Heart right ventricle (tissue), 16 donors: ENCODE measurements at regions of chr19 and their contacts with region 1.

Region 1: GRCh38 chr19:11339254-11340098 is at the start of gene RAB3D:
- DNase-seq: peak; percentile 95 to 96
- ATAC-seq: peak; percentile 93 to 99 (median 97)
- H3K4me3 ChIP-seq: peak within 1 kb of the TSS; percentile 58 to 84 (median 81)
- H3K27ac ChIP-seq: peak within 1 kb of the TSS; percentile 23 to 91 (median 82)
- H3K4me1 ChIP-seq: peaks cover 3 to 45% (median 19%) of the 10 kb centered on the region in 9 donors
- H3K27me3 ChIP-seq: no peaks in the 10 kb centered on the region
- CTCF ChIP-seq: no peak
- total RNA-seq, gene RAB3D: 4.5 to 11.6 (median 6.3) TPM

Region 2: GRCh38 chr19:11261941-11262839 is 77.3 kb before region 1 on chr19 and contains the start of gene DOCK6:
- intact Hi-C with region 1: no loop called
- DNase-seq: peak in 1 of 2 donors; percentile 56
- ATAC-seq: peak; percentile 24 to 72 (median 42)
- H3K4me3 ChIP-seq: peak within 1 kb of the TSS; percentile 51 to 98 (median 76)
- H3K27ac ChIP-seq: peak within 1 kb of the TSS; percentile 88 to 99 (median 93)
- H3K4me1 ChIP-seq: peaks cover 2 to 54% (median 12%) of the 10 kb centered on the region in 9 donors
- H3K27me3 ChIP-seq: peaks cover 0 to 38% (median 0%) of the 10 kb centered on the region in 7 donors
- CTCF ChIP-seq: peak in 7 of 9 donors; percentile 33 to 64 (median 49)
- total RNA-seq, gene DOCK6: 27.6 to 57.2 (median 40.2) TPM

Region 3: DNA sequence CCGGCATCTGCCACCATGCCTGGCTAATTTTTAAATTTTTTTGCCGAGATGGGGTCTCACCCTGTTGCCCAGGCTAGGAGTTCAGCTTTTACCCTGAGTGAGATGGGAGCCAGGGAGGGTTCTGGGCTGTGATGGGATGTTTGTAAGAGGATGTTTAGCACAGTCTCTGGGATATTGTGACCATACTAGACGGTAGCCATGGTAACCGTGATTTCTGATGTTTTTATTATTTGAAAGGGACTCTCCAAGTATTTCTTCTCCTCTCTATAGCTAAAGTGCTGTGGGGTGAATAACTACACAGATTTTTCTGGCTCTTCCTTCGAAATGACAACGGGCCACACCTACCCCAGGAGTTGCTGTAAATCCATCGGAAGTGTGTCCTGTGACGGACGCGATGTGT is 33.1 kb before region 1 on chr19:
- intact Hi-C with region 1: loop called in 1 of 10 experiments (anchors 2 kb)
- DNase-seq: no peak
- ATAC-seq: no peak
- H3K4me3 ChIP-seq: no peak overlapping the region
- H3K27ac ChIP-seq: no peak overlapping the region
- H3K4me1 ChIP-seq: no peaks in the 10 kb centered on the region
- H3K27me3 ChIP-seq: no peaks in the 10 kb centered on the region
- CTCF ChIP-seq: no peak

Region 4: DNA sequence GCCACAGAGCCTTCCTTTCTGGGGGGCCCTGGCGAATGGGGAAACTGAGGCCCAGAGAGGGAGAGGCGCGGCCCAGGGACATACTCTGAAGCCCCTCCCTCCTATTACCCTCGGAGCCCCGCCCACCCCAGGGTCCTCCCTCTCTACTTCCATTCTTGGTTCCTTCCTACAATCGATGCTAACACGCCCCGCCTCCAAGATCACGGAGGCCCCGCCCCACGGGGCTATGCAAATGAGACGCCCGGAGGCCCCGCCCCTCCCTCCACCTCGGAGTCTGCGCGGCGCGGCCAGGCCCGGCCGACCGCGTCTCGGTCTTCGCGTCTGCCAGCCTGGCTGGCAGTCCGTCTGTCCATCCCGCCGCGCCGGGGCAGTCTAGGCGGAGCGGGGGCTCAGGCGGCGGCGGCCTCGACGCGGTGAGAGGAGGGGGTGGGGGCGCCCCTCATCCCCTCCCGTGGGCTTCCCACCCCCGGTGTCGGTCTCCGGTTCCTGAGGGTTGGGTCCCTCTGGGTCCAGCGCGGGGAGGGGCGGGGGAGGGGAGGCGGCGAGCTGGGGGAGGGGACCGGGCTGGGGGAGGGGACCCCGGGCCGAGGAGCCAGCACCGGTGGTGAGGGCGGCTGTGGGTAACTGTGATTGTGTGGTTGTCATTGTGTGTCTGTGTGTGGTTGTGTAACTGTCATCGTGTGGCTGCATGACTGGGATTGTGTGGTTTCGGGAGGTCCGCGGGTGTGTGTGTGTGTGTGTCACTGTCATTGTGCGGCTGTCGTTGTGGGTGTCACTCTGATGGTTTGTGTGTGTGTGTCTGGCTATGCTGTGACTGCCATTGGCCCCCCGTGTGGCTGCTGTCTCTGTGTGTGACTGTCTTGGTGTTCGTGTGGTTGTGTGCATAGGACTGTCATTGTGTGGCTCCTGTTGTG is 15.9 kb after region 1 on chr19 and contains the start of gene PLPPR2:
- intact Hi-C with region 1: no loop called
- DNase-seq: peak; percentile 93 to 95
- ATAC-seq: peak; percentile 92 to 97 (median 94)
- H3K4me3 ChIP-seq: peak within 1 kb of the TSS; percentile 51 to 71 (median 64)
- H3K27ac ChIP-seq: peak within 1 kb of the TSS in 9 of 10 donors; percentile 30 to 86 (median 63)
- H3K4me1 ChIP-seq: peaks cover 0 to 16% (median 6%) of the 10 kb centered on the region in 9 donors
- H3K27me3 ChIP-seq: no peaks in the 10 kb centered on the region
- CTCF ChIP-seq: no peak
- total RNA-seq, gene PLPPR2: 4.1 to 19.8 (median 10.3) TPM

Region 5: GRCh38 chr19:11410682-11411081 is 71.2 kb after region 1 on chr19:
- intact Hi-C with region 1: no loop called
- DNase-seq: no peak
- ATAC-seq: no peak
- H3K4me3 ChIP-seq: no peak overlapping the region
- H3K27ac ChIP-seq: no peak overlapping the region
- H3K4me1 ChIP-seq: peaks cover 0 to 13% (median 4%) of the 10 kb centered on the region in 9 donors
- H3K27me3 ChIP-seq: peaks cover 0 to 26% (median 17%) of the 10 kb centered on the region in 7 donors
- CTCF ChIP-seq: no peak

Region 6: GRCh38 chr19:11597202-11598102 is 258.0 kb after region 1 on chr19 and contains the start of gene ZNF627:
- intact Hi-C with region 1: no loop called
- DNase-seq: peak; percentile 98 to 100
- ATAC-seq: peak; percentile 99 to 100 (median 100)
- H3K4me3 ChIP-seq: peak within 1 kb of the TSS; percentile 78 to 100 (median 92)
- H3K27ac ChIP-seq: peak within 1 kb of the TSS; percentile 86 to 98 (median 92)
- H3K4me1 ChIP-seq: peaks cover 4 to 34% (median 19%) of the 10 kb centered on the region in 9 donors
- H3K27me3 ChIP-seq: no peaks in the 10 kb centered on the region
- CTCF ChIP-seq: peak in 6 of 9 donors; percentile 16 to 42 (median 32)
- total RNA-seq, gene ZNF627: 5.3 to 9.8 (median 6.7) TPM